Psoas muscle (tissue), 8 donors: ENCODE measurements at regions of chr10 and their contacts with region 1.

Region 1: GRCh38 chr10:42782446-42783180 is at the start of gene BMS1:
- DNase-seq: peak; percentile 85 to 94
- ATAC-seq: peak; percentile 96 to 99 (median 96)
- H3K4me3 ChIP-seq: peak within 1 kb of the TSS; percentile 85
- H3K27ac ChIP-seq: peak within 1 kb of the TSS; percentile 90
- H3K4me1 ChIP-seq: peaks cover 9% of the 10 kb centered on the region
- H3K27me3 ChIP-seq: peaks cover 0 to 5% (median 0%) of the 10 kb centered on the region in 3 donors
- CTCF ChIP-seq: no peak
- total RNA-seq, gene BMS1: 13.6 to 27.1 (median 22.2) TPM

Region 2: GRCh38 chr10:42638055-42638820 is 144.4 kb before region 1 on chr10 and contains the start of gene ZNF33B:
- intact Hi-C with region 1: loop called in 1 of 2 experiments (anchors 5 kb)
- DNase-seq: peak; percentile 91 to 97
- ATAC-seq: peak; percentile 97 to 99 (median 98)
- H3K4me3 ChIP-seq: peak within 1 kb of the TSS; percentile 93
- H3K27ac ChIP-seq: peak within 1 kb of the TSS; percentile 89
- H3K4me1 ChIP-seq: peaks cover 9% of the 10 kb centered on the region
- H3K27me3 ChIP-seq: no peaks in the 10 kb centered on the region
- CTCF ChIP-seq: no peak
- total RNA-seq, gene ZNF33B: 5.1 to 10.6 (median 6.6) TPM

Region 3: DNA sequence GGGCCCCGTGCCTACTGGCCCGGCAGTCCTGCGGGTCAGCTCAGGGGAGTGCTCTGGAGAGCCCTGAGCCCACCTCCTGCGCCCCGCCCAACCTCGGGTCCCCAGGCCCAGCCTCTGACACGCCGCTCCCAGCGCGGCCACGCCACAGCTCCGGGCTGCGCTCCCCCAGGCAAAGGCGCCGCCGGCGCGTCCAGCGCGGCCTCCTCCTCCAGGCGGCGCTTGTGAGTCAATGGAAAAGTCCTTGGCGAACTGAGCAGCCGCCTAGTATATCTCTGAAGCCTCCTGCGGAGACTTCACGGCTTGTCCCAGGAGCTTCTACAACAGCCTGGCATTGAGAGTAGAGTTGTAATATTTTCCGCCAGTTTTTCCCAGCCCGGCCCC is 29.5 kb before region 1 on chr10:
- intact Hi-C with region 1: loop called in 1 of 2 experiments (anchors 1 kb)
- DNase-seq: peak; percentile 83 to 89
- ATAC-seq: peak; percentile 72 to 91 (median 84)
- H3K4me3 ChIP-seq: peak overlapping the region; percentile 71
- H3K27ac ChIP-seq: no peak overlapping the region
- H3K4me1 ChIP-seq: peaks cover 16% of the 10 kb centered on the region
- H3K27me3 ChIP-seq: peaks cover 0 to 72% (median 14%) of the 10 kb centered on the region in 3 donors
- CTCF ChIP-seq: peak; percentile 88

Region 4: GRCh38 chr10:42802876-42803275 is 20.3 kb after region 1 on chr10:
- intact Hi-C with region 1: loop called in 1 of 2 experiments (anchors 2 kb)
- DNase-seq: no peak
- ATAC-seq: no peak
- H3K4me3 ChIP-seq: no peak overlapping the region
- H3K27ac ChIP-seq: no peak overlapping the region
- H3K4me1 ChIP-seq: no peaks in the 10 kb centered on the region
- H3K27me3 ChIP-seq: no peaks in the 10 kb centered on the region
- CTCF ChIP-seq: no peak

Region 5: DNA sequence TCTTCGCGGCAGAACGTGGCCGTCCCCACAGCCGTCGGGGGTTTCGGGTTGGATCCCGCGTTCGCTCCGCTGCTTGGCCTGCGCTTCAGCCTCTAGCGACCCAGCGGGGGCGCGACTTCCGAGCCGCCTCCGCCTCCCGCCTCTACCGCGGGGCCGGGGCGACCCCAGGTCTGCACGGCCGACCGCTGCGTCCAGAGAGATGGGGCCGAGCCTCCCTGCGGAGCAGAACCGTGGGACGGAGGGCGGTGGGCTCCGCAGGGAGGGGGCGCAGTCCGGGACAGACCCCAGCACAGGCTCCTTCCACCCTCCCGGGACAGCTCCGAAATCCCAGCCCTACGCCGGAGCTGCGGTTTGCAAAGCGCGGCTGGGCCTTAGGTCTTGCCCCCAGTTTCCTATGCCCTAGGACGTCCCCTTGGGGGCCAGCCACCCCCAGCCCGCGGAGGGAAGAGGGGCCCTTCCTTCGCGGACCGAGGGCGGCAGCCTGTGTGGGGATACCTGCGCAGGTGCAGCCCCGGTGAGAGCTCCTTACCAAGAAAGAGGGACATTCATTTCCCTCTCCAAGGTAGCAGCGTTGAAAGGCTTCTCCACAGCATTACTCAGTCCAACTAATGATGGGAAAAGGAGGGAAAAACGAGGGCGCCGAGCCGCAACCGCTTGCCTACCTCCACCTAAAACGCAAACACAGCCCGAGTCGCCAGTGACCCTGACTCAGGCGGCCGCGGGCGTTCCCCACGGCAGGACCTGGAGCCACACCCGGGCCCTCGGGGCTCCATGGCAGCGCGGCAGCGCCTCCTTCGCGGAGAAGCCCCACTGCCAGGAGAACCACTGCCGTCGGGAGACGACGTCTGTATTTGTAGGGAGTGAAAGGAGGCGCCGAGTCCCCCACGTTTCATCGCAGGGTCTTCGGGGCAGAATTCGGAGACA is 115.7 kb after region 1 on chr10:
- intact Hi-C with region 1: no loop called
- DNase-seq: no peak
- ATAC-seq: no peak
- H3K4me3 ChIP-seq: no peak overlapping the region
- H3K27ac ChIP-seq: no peak overlapping the region
- H3K4me1 ChIP-seq: no peaks in the 10 kb centered on the region
- H3K27me3 ChIP-seq: peaks cover 4 to 28% (median 15%) of the 10 kb centered on the region in 3 donors
- CTCF ChIP-seq: no peak

Region 6: GRCh38 chr10:42940487-42941294 is 158.1 kb after region 1 on chr10:
- intact Hi-C with region 1: no loop called
- DNase-seq: no peak
- ATAC-seq: no peak
- H3K4me3 ChIP-seq: no peak overlapping the region
- H3K27ac ChIP-seq: no peak overlapping the region
- H3K4me1 ChIP-seq: no peaks in the 10 kb centered on the region
- H3K27me3 ChIP-seq: peaks cover 0 to 5% (median 0%) of the 10 kb centered on the region in 3 donors
- CTCF ChIP-seq: no peak